KBM-7 (cell line): ENCODE measurements at regions of chrX and their contacts with region 1.

Region 1: GRCh38 chrX:41734530-41734929 is 10.5 kb downstream of the GPR82 start:
- DNase-seq: peak; percentile 63

Region 2: DNA sequence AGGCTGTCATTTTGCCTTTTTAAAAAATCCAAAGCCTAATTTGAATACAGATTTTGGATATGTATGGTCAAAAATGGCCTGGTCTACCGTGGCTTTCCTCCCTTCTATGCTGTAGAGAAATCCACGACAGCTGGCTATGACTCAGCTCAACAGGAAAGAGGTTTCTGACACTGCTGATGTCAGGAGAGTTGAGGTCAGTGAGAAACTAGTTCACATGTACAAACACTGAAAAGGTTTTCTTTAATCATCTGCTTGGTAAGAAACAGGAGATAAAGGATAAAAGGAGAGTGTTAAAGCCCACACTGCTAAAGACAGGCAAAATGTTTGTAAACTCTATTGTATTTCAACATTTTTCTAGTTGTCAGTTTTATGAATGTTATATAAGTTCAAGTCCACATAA is 173.5 kb before region 1 on chrX:
- in situ Hi-C with region 1: loop called (anchors 25 kb)
- DNase-seq: peak; percentile 55

Region 3: DNA sequence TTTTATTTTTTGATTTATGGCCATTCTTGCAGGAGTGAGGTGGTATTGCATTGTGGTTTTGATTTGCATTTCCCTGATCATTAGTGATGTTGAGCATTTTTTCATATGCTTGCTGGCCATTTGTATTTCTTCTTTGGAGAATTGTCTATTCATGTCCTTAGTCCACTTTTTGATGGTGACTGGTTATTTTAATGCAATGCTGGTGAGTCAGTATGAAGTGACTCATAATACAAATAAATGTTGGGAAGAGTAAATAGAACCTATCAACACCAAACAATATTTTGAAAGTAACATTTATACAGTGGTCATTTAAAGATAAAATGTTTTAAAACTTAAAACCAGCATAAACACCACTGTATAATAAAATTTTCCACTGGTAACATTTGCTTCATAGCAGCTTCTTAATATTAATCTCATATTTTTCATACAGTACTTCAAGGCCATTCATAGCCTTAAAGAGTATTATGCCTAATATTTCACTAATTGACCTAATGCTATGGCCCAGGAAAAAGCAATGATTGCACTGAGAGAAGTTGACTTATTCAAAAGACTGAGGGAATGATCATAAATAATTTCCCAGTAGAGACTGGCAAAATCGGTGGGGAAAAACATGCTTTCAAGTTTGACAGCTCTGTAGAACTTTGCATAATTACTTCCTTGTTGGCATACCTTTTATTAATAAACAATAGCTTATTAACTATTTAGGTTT is 154.9 kb after region 1 on chrX:
- in situ Hi-C with region 1: no loop called
- DNase-seq: no peak

Region 4: GRCh38 chrX:42664680-42665079 is 930.1 kb after region 1 on chrX:
- in situ Hi-C with region 1: no loop called
- DNase-seq: no peak